ENCODE measurements at regions of chr2 and their contacts with region 1.

Region 1: DNA sequence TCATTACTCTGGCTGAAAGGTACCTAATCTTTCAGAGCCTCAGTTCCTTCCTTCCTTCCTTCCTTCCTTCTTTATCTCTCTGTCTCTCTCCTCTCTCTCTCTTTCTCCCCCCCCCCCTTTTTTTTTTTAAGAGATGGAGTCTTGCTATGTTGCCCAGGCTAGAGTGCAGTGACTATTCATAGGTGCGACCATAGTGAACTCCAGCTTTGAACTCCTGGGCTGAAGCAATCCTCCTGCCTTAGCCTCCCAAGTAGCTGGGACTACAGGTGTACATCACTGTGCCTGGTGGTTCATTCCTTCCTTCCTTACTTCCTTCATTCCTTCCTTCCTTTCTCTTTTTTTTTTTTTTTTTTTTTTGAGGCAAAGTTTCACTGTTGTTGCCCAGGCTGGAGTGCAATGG is 64.3 kb upstream of the MAP4K3 start:
- DNase-seq: no peak
- ATAC-seq: no peak
- H3K4me3 ChIP-seq: no peak overlapping the region
- H3K4me3 Mint-ChIP-seq: no peak overlapping the region
- H3K27ac ChIP-seq: no peak overlapping the region
- H3K27ac Mint-ChIP-seq: no peak overlapping the region
- H3K4me1 ChIP-seq: no peaks in the 10 kb centered on the region
- H3K4me1 Mint-ChIP-seq: no peaks in the 10 kb centered on the region
- H3K27me3 ChIP-seq: no peaks in the 10 kb centered on the region
- H3K27me3 Mint-ChIP-seq: peaks cover 9% of the 10 kb centered on the region in 2 donors

Region 2: DNA sequence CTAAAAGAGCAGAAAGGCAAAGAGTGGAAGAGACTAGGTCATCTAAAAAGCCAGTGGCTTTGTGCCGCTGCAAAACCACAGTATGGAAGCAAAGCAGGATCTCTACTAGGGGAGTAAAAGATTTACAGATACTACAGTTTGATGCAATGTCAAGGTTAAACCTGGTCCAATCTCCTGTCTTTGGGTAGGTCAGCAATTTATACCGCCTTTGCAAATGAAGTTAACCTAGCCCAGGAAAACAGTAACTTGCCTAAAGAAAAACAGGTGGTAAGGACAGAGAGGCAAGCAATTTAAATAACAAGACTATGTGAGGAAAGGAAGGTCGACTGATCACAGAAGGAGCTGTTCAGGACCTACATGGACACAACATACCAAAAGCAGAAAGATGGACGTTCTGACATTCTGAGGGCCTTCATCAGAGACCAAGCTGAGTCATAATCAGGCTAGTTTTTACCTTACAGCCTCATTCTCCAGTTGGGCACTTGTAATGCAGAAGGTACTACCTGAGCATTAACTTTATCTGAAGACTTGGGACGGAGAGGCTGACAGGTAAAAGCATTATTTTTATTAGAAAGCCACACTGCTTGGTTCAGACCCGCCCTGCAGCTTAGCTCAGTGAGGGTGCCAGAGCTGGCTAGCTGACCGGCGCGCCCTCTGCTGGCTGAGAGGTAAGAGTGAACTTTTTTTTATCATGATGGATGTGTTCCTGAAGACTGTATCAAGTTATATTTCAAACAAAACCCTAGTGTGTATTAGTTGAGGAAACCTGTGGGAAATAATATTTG is 273.6 kb before region 1 on chr2:
- CTCF ChIA-PET with region 1: no interaction called
- POLR2A ChIA-PET with region 1: no interaction called
- DNase-seq: peak; percentile 58 to 90 (median 75)
- ATAC-seq: peak; percentile 83 to 86 (median 85)
- H3K4me3 ChIP-seq: no peak overlapping the region
- H3K4me3 Mint-ChIP-seq: peak overlapping the region; percentile 54 to 71 (median 63)
- H3K27ac ChIP-seq: no peak overlapping the region
- H3K27ac Mint-ChIP-seq: peak overlapping the region; percentile 53 to 88
- H3K4me1 ChIP-seq: peaks cover 2 to 8% of the 10 kb centered on the region in 2 experiments
- H3K4me1 Mint-ChIP-seq: peaks cover 19 to 27% (median 20%) of the 10 kb centered on the region in 3 donors
- H3K27me3 ChIP-seq: no peaks in the 10 kb centered on the region
- H3K27me3 Mint-ChIP-seq: no peaks in the 10 kb centered on the region

Region 3: DNA sequence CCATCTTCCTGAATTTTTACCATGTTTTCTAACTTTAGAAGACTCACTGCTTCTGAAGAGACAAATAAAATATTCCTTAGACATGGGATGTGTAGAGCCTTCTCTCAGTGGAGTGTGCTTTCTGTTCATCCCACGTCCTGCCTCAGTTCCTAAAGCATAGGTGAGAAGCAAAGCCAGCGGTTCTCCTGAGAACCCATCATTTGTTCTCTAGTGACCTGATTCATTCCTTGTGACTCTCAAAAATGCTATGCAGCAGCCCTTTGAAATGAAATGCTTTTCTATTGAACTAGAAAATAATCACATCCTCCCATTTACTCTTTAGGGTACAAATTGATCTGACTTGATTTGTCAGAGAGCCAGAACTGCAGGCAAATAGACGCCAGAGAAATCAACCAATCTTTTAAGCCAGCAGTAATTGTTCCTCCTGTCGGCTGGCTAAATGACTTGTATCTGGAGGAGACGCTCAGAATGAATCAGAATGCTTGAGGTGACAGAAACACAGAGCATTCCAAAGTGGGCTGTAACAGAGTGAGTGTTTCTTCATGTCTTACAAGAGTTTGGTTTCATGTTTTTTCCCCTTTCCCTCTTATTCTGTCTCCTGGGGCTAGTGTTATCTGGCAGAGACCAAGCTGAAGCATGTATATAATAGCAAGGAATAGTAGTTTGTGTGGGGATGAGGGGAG is 83.0 kb after region 1 on chr2:
- CTCF ChIA-PET with region 1: no interaction called
- POLR2A ChIA-PET with region 1: interaction called in 1 of 2 experiments, 10 read pairs
- DNase-seq: no peak
- ATAC-seq: no peak
- H3K4me3 ChIP-seq: no peak overlapping the region
- H3K4me3 Mint-ChIP-seq: no peak overlapping the region
- H3K27ac ChIP-seq: no peak overlapping the region
- H3K27ac Mint-ChIP-seq: no peak overlapping the region
- H3K4me1 ChIP-seq: no peaks in the 10 kb centered on the region
- H3K4me1 Mint-ChIP-seq: no peaks in the 10 kb centered on the region
- H3K27me3 ChIP-seq: peaks cover 0 to 2% of the 10 kb centered on the region in 2 experiments
- H3K27me3 Mint-ChIP-seq: peaks cover 5 to 9% of the 10 kb centered on the region in 2 donors

Measured in T-cell (primary cell).